HEK293 (cell line): ENCODE measurements at regions of chr5 and their contacts with region 1.

Region 1: DNA sequence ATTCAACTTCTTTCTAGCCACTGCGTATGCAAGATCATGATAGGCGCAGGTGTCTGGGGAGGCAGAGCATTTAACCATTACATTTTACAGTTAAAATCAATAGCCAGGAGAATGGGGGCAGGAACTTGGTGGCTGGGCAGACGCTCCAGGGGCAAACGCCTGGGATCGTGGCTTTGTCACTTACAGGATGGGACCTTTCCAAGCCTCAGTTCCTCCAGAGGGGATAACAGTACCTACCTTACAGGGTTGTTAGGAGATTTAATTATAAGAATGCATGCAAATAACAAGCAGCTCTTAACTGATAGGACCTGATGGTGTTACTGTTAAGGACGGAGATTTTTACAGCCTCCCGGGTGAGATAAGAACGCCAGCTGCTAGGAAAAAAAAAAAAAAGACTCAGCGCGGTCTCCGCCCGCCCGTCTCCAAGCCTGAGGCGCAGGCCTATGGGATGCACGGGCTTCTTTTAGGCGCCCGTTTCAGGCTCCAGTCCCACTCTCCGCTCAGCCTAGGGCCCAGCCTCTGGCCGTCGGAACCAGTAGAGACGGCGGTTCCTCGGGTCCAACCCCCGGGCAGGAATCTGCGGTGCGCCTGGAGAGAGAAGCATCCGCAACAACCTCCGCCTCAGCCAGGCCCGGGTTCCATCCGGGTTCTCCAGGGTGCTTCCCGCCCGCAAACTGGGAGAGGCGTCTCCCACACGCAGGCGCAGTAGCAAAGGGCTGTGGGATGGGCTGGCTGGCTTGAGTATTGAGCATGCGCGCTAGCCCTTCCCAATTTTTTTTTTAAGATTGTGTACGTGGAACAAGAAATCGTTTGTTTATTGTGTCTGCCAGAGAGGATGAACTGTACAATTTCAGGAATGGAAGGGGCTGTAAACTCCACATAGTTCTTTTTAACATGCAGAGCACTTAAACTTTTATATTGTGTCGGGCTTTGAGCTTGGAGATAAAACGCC is at the start of gene FAM200C:
- H3K4me3 ChIP-seq: peak within 1 kb of the TSS; percentile 58
- H3K27ac ChIP-seq: peak within 1 kb of the TSS; percentile 97
- H3K4me1 ChIP-seq: peaks cover 5% of the 10 kb centered on the region
- CTCF ChIP-seq: no peak

Region 2: DNA sequence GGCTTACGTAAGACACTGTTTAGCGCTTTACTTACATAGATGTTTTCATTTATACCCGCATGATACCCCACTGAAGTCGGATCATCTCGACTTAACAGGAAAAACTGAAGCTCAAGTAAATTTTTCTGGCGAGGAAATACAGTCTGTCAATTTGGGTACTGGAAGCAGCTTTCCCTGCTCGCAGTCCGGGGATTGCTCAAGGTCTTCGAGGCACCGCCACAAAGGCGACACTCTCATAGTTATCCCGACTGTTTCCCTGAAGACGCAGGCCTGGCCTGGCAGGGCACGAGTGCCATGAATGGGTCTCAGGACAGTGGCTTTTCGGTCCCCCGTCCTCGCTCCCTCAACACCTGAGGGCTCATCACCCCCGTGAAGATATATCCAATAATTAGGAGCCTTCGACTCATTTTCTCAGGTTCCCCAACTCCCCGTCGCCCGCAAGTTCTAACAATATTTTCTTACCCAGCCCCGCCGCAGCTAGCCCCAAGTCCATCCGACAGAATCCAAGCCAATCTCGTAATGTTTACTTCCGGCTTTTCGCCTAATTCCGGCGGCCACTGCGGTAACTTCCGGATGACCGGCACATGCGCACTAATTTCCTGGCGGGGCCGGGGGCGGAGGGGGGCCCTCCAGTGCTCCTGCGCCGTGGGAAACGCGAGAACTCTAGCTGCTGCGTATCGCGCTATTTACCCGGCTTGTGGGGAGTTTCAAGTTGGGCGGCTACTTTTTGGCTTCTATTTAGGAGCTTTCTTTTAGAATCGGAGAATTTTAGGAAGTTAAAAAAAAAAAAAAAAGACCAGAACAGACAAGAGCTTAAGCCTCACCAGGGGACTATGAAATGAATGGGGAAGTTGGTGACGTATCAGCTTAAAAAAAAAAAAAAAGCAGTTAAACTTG is 19.1 kb after region 1 on chr5 and contains the start of gene SLU7:
- CTCF ChIA-PET with region 1: interaction called, 3 read pairs
- POLR2A ChIA-PET with region 1: interaction called, 21 read pairs
- H3K4me3 ChIP-seq: peak within 1 kb of the TSS; percentile 99
- H3K27ac ChIP-seq: peak within 1 kb of the TSS; percentile 25
- H3K4me1 ChIP-seq: no peaks in the 10 kb centered on the region; the same call in 1 of the 2 replicates
- CTCF ChIP-seq: no peak

Region 3: DNA sequence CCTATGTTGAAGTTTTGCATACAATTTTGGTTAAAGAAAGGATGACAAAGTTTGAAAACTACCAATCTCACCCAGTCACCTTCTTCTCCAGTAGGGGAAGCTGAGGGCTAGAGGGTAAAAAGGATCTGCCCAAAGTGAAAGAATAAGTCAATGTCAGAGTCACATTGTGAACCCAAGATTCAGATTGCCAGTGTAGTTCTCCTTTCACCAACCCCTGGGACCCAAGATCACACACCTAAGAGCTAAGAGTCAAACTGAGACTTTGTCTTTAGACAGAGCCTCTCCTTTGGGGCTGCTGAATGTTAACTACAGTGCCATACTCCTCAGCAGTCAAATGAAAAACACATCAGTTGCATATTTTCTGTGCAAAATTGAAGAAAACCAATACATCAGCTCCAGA is 241.7 kb after region 1 on chr5:
- CTCF ChIA-PET with region 1: no interaction called
- POLR2A ChIA-PET with region 1: no interaction called
- H3K4me3 ChIP-seq: no peak overlapping the region
- H3K27ac ChIP-seq: no peak overlapping the region
- H3K4me1 ChIP-seq: no peaks in the 10 kb centered on the region
- CTCF ChIP-seq: no peak